Caco-2 (cell line): ENCODE measurements at regions of chr15 and their contacts with region 1.

Region 1: GRCh38 chr15:92868992-92869988 is 30.8 kb upstream of the CHD2 start:
- DNase-seq: peak; percentile 39 to 45
- H3K4me3 ChIP-seq: no peak overlapping the region
- H3K4me3 Mint-ChIP-seq: no peak overlapping the region
- H3K27ac Mint-ChIP-seq: peak overlapping the region; percentile 69
- H3K4me1 ChIP-seq: peaks cover 30% of the 10 kb centered on the region
- H3K4me1 Mint-ChIP-seq: peaks cover 27% of the 10 kb centered on the region
- H3K27me3 ChIP-seq: no peaks in the 10 kb centered on the region
- H3K27me3 Mint-ChIP-seq: no peaks in the 10 kb centered on the region
- CTCF ChIP-seq: no peak

Region 2: DNA sequence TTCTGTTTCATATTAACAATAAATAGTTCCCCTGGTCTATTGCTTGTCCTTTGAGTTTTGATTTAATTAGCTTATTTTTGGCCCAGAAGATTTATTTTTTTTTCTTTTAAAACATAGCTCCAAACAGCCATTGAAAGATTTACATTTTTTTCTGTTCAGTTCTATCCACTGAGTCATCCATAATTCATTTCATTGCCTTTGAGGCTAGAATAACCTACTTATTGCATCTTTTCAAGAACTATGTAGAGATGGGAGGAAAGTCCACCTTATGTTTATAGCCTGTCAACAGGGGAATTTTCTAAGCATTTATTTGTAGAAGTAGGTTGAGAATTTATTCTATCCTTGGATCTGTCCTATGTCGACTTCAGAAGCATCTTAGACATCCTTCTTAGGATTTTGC is 22.5 kb before region 1 on chr15:
- CTCF ChIA-PET with region 1: no interaction called
- POLR2A ChIA-PET with region 1: interaction called, 13 read pairs
- intact Hi-C with region 1: no loop called
- DNase-seq: no peak
- H3K4me3 ChIP-seq: no peak overlapping the region
- H3K4me3 Mint-ChIP-seq: no peak overlapping the region
- H3K27ac Mint-ChIP-seq: no peak overlapping the region
- H3K4me1 ChIP-seq: 0 out of 2 replicates have a peak, but pooled peaks cover 3% of the 10 kb centered on the region
- H3K4me1 Mint-ChIP-seq: peaks cover 7% of the 10 kb centered on the region
- H3K27me3 ChIP-seq: no peaks in the 10 kb centered on the region
- H3K27me3 Mint-ChIP-seq: no peaks in the 10 kb centered on the region
- CTCF ChIP-seq: no peak